ENCODE measurements at regions of chr6 and their contacts with region 1.

Region 1: DNA sequence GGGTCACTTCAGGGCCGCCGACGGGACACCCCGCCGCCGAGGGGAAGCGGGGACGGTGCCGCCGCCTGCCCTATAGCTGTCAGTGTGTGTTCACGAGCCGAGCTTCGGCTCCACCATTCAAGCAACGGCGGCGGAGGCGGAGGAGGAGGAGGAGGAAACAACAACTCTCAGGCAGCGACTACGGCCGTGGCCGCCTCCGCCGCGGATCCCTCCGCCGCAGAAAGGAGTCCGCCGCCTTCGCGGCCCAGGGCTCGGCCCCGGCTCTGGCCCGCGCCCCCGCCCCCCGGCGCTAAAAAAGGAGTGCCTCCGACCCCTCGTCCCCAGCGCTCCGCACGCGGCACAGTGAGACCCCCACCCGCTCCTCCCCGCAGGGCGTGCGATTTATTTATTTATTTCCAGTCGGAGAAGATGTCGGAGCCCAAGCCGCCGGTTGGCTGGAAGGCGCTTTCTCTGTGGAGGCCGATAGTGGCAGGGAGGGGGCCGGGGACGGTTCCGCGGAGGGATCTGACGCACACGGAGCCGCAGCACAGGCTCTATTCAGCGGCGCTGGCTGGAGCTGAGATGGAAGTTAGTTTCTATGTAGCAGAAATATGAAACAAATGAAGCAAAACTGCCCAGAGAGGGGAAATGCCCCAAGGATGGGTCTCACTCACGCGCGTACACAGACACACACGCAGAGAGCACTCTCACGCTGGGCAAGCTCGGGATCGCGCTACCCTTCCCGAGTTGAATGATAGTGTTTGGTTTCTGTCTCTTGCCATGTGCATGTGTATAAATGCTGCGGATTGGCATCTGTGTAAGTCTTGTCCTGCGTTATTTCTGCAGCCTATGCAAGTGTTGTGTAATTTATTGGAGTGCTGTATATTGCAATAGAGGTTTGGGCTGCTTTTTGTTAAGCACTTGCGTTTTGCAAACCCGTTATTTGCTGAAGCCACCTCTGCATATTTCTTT is at the start of gene PHIP:
- DNase-seq: peak; percentile 96
- H3K4me3 Mint-ChIP-seq: peak within 1 kb of the TSS; percentile 96
- H3K27ac Mint-ChIP-seq: peak within 1 kb of the TSS; percentile 96
- H3K4me1 Mint-ChIP-seq: peaks cover 30% of the 10 kb centered on the region
- H3K27me3 Mint-ChIP-seq: peaks cover 18% of the 10 kb centered on the region
- total RNA-seq, gene PHIP: 33.9 and 34.1 TPM in 2 replicates

Region 2: GRCh38 chr6:78867370-78868040 is 210.8 kb before region 1 on chr6 and contains the start of gene IRAK1BP1:
- intact Hi-C with region 1: loop called (anchors 1 kb)
- DNase-seq: peak; percentile 95
- H3K4me3 Mint-ChIP-seq: peak within 1 kb of the TSS; percentile 97
- H3K27ac Mint-ChIP-seq: peak within 1 kb of the TSS; percentile 97
- H3K4me1 Mint-ChIP-seq: peaks cover 22% of the 10 kb centered on the region
- H3K27me3 Mint-ChIP-seq: peaks cover 4% of the 10 kb centered on the region
- total RNA-seq, gene IRAK1BP1: 3.4 and 3.6 TPM in 2 replicates

Region 3: GRCh38 chr6:79040083-79040482 is 38.3 kb before region 1 on chr6:
- intact Hi-C with region 1: loop called (anchors 1 kb)
- DNase-seq: no peak
- H3K4me3 Mint-ChIP-seq: no peak overlapping the region
- H3K27ac Mint-ChIP-seq: no peak overlapping the region
- H3K4me1 Mint-ChIP-seq: peaks cover 28% of the 10 kb centered on the region
- H3K27me3 Mint-ChIP-seq: no peaks in the 10 kb centered on the region

Region 4: GRCh38 chr6:79233611-79234149 is 155.3 kb after region 1 on chr6:
- intact Hi-C with region 1: loop called (anchors 1 kb)
- DNase-seq: peak; percentile 93
- H3K4me3 Mint-ChIP-seq: peak overlapping the region; percentile 92
- H3K27ac Mint-ChIP-seq: peak overlapping the region; percentile 94
- H3K4me1 Mint-ChIP-seq: peaks cover 21% of the 10 kb centered on the region
- H3K27me3 Mint-ChIP-seq: peaks cover 2% of the 10 kb centered on the region

Region 5: DNA sequence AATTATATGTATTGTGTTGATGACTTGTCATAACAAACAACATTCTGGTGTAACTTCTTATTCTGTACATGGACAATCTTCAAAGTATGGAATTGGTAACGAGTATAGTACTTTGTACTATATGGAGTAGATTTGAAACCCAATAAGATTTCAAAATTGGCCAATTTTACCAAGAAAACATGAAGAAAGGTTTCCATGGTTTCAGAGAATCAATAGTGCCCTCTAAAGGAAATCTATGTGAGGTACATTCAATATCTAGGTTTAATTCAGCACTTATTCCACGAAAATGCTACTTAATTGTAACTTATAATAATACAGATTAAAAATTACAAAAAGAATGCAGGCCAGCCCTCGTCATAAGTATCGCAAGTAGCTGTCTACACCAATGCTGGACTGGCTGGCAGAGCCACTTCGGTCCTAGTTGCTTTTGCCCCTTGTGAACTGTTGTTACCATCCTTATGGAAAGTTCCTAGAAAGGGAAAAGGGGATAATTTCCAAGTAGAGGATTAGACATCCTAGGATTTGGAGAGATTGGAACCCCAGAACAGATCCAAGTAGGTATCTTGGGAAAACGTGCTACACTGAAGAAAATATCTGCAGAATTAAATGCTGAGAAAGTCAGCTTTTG is 388.0 kb after region 1 on chr6:
- intact Hi-C with region 1: loop called (anchors 10 kb)
- DNase-seq: no peak
- H3K4me3 Mint-ChIP-seq: no peak overlapping the region
- H3K27ac Mint-ChIP-seq: no peak overlapping the region
- H3K4me1 Mint-ChIP-seq: no peaks in the 10 kb centered on the region
- H3K27me3 Mint-ChIP-seq: no peaks in the 10 kb centered on the region

Region 6: DNA sequence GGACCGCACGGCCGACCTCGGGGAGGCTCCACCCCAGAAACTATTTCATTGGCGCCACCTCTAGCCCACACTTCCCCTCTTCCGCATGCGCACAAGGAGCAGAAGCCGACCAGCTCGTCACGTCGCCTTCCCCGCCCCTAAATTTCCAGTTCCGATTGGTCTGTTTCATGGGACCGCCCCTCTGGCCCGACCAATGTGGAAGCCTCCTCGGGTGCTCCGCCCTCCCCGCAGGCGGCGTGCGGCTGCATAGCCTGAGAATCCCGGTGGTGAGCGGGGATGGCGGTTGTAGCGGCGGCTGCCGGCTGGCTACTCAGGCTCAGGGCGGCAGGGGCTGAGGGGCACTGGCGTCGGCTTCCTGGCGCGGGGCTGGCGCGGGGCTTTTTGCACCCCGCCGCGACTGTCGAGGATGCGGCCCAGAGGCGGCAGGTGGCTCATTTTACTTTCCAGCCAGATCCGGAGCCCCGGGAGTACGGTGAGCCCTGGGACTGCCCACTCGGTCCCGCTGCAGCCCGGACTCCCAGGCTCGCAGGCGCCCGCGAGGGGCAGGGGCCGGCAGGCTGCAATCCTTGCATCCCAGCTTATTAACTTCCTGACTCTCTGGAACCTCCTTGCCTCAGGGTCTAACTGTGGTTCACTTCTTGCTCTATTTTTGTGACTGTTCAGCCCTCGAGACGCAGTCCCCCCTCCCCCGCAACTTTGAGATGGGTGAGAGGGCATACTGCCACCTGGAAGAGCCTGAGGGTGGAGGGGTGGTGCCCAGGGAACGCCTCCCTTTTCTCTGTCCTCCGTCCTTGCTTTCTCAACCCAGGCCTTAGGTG is 1028.3 kb after region 1 on chr6 and contains the start of gene BCKDHB:
- intact Hi-C with region 1: loop called (anchors 2 kb)
- DNase-seq: peak; percentile 99
- H3K4me3 Mint-ChIP-seq: peak within 1 kb of the TSS; percentile 89
- H3K27ac Mint-ChIP-seq: peak within 1 kb of the TSS; percentile 94
- H3K4me1 Mint-ChIP-seq: peaks cover 18% of the 10 kb centered on the region
- H3K27me3 Mint-ChIP-seq: peaks cover 9% of the 10 kb centered on the region
- total RNA-seq, gene BCKDHB: 15.6 and 16.5 TPM in 2 replicates